ENCODE measurements at regions of chr15 and their contacts with region 1.

Region 1: DNA sequence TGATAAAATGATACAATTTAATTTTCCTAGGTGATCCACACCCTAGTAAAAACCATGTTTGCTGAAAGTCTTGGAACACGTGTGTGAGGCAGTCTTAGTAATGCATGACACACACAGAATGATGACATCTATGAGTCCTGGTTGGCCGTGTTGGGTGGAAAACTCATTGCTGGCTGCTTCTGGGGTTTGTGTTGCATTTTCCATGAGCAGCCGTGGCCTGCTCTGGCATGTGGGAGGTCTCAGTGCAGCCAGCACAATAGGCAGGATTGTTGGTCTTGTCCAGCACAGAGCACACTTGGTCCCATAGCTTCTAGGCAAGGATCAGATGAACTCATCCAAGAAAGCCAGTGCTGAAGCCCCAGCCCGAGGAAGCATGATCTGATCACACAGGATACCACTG is 172.8 kb upstream of the UBE3A start:
- DNase-seq: peak; percentile 32 to 80
- H3K4me3 ChIP-seq: no peak overlapping the region
- H3K27ac ChIP-seq: peak overlapping the region in 1 of 2 donors; percentile 29
- H3K4me1 ChIP-seq: peaks cover 0 to 9% of the 10 kb centered on the region in 2 donors
- H3K27me3 ChIP-seq: no peaks in the 10 kb centered on the region
- CTCF ChIP-seq: no peak

Region 2: GRCh38 chr15:25664761-25665160 is 53.2 kb after region 1 on chr15:
- intact Hi-C with region 1: loop called (anchors 5 kb)
- DNase-seq: no peak
- H3K4me3 ChIP-seq: no peak overlapping the region
- H3K27ac ChIP-seq: no peak overlapping the region
- H3K4me1 ChIP-seq: peaks cover 0 to 13% of the 10 kb centered on the region in 2 donors
- H3K27me3 ChIP-seq: no peaks in the 10 kb centered on the region
- CTCF ChIP-seq: no peak

Measured in ascending aorta (tissue), 2 donors.